T-cell (primary cell): ENCODE measurements at regions of chr20 and their contacts with region 1.

Region 1: DNA sequence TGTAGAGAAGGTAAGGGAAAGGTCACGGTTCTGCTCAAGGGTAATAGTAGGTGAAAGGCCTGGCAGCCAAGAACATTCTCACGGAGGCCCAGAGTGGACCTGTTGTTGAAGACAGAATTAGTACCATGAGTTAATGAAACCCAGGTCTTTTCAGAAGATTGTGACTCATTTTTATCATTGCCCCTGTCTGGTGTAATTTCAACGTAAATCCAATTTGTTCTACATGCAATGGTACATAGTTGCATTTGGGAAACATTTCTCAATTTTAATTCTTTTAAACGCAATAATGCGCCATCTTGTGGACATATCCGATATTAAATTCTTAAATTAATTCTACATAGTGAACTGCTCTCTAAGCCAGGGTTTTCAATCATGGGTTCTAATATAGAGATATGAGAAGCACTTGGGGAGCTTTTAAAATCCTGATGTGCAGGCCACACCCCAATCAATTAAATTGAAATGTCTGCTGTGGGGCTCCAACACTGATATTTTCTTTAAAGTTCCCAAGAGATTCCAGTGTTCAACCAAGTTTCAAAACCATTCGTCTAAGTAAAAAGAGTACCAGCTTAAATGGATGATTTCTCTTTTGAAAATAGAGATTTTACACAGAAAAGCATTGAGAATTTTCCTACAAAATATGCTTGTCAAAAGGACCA is 257.4 kb downstream of the PLCB1 start:
- DNase-seq: peak in 2 of 35 experiments; percentile 2 to 65
- ATAC-seq: no peak
- H3K4me3 ChIP-seq: no peak overlapping the region
- H3K4me3 Mint-ChIP-seq: no peak overlapping the region
- H3K27ac ChIP-seq: no peak overlapping the region
- H3K27ac Mint-ChIP-seq: no peak overlapping the region
- H3K4me1 ChIP-seq: no peaks in the 10 kb centered on the region
- H3K4me1 Mint-ChIP-seq: peaks cover 0 to 6% (median 0%) of the 10 kb centered on the region in 3 donors
- H3K27me3 ChIP-seq: peaks cover 0 to 7% of the 10 kb centered on the region in 2 experiments
- H3K27me3 Mint-ChIP-seq: peaks cover 0 to 4% of the 10 kb centered on the region in 2 donors

Region 2: DNA sequence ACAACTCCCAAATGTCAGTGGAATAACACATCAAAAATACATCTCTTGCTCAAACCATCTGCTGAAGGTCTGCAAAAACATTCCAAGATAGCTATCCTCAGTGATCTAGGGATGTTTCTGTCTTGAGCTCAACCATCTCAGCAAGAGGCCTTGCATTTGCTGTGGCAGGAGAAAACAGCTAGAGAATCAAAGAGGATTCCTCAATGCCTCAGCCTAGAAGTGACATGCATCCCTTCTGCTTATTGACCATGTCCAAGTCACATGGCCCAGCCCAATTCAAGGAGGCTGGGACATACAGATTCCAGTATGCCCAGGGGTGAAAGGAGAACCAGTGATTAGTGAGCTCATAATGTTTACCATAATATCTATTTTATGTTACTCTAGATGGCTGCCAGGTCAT is 12.0 kb after region 1 on chr20:
- CTCF ChIA-PET with region 1: interaction called, 5 to 10 read pairs
- POLR2A ChIA-PET with region 1: no interaction called
- DNase-seq: no peak
- ATAC-seq: no peak
- H3K4me3 ChIP-seq: no peak overlapping the region
- H3K4me3 Mint-ChIP-seq: no peak overlapping the region
- H3K27ac ChIP-seq: no peak overlapping the region
- H3K27ac Mint-ChIP-seq: no peak overlapping the region
- H3K4me1 ChIP-seq: peaks cover 0 to 6% of the 10 kb centered on the region in 2 experiments
- H3K4me1 Mint-ChIP-seq: peaks cover 4 to 8% (median 5%) of the 10 kb centered on the region in 3 donors
- H3K27me3 ChIP-seq: no peaks in the 10 kb centered on the region
- H3K27me3 Mint-ChIP-seq: peaks cover 0 to 3% of the 10 kb centered on the region in 2 donors

Region 3: GRCh38 chr20:8542110-8542486 is 152.6 kb after region 1 on chr20:
- CTCF ChIA-PET with region 1: no interaction called
- POLR2A ChIA-PET with region 1: no interaction called
- DNase-seq: no peak
- ATAC-seq: no peak
- H3K4me3 ChIP-seq: no peak overlapping the region
- H3K4me3 Mint-ChIP-seq: no peak overlapping the region
- H3K27ac ChIP-seq: no peak overlapping the region
- H3K27ac Mint-ChIP-seq: no peak overlapping the region
- H3K4me1 ChIP-seq: no peaks in the 10 kb centered on the region
- H3K4me1 Mint-ChIP-seq: no peaks in the 10 kb centered on the region
- H3K27me3 ChIP-seq: no peaks in the 10 kb centered on the region
- H3K27me3 Mint-ChIP-seq: no peaks in the 10 kb centered on the region